ENCODE measurements at regions of chr1 and their contacts with region 1.

Region 1: DNA sequence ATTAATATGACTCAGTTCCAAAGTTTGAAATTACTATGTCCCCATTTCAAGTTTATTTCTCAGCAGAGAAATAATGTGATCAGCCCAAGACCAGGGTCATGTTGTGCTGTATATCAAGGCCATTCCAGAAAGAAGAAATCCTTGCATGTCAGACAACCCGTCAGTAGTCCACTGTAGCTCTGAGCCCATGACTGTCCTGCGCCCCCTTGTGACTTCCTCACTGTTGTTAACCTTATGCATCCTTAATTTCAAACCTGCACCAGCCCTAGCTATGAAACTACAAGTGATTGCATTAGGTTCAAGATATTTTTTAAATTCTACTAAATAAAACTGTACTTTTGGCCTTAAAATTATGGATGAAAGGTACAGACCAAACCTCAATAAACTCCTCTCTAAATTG is 133.0 kb downstream of the LRRC7 start:
- DNase-seq: peak; percentile 6
- ATAC-seq: peak; percentile 88
- H3K4me3 ChIP-seq: no peak overlapping the region
- H3K27ac ChIP-seq: no peak overlapping the region
- H3K4me1 ChIP-seq: no peaks in the 10 kb centered on the region
- H3K27me3 ChIP-seq: no peaks in the 10 kb centered on the region
- CTCF ChIP-seq: peak; percentile 26 to 53 (median 51); a peak in 5 of 6 replicates
- POLR2A ChIP-seq: no peak
- RAD21 ChIP-seq: peak; percentile 62

Region 2: GRCh38 chr1:68819190-68819829 is 881.5 kb before region 1 on chr1:
- CTCF ChIA-PET with region 1: no interaction called
- POLR2A ChIA-PET with region 1: no interaction called
- RAD21 ChIA-PET with region 1: no interaction called
- intact Hi-C with region 1: loop called (anchors 5 kb)
- DNase-seq: peak; percentile 31
- ATAC-seq: peak; percentile 97
- H3K4me3 ChIP-seq: no peak overlapping the region
- H3K27ac ChIP-seq: no peak overlapping the region
- H3K4me1 ChIP-seq: no peaks in the 10 kb centered on the region
- H3K27me3 ChIP-seq: peaks cover 4% of the 10 kb centered on the region; the same call in 1 of the 2 replicates
- CTCF ChIP-seq: peak; percentile 22 to 70 (median 61); a peak in 5 of 6 replicates
- POLR2A ChIP-seq: no peak
- RAD21 ChIP-seq: peak; percentile 69

Region 3: DNA sequence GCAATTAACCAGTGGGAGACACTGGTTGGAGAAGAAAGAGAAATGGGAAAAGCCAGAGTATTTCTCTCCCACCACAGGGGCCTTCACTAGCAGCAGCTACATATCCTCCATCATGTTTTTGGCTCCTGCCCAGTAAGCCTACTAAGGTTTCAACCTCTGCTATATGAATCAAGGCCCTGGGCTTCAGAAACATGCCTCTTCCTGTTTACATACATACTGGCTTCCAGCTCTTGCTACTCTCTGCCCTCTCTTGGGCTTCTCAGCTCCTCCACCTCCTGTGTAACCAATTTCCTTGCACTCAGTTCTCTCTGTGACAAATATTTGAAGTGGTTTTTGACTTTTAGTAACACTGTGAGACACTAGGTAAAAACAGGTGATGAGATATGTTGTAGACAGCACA is 52.3 kb before region 1 on chr1:
- CTCF ChIA-PET with region 1: no interaction called
- POLR2A ChIA-PET with region 1: no interaction called
- RAD21 ChIA-PET with region 1: no interaction called
- intact Hi-C with region 1: no loop called
- DNase-seq: no peak
- ATAC-seq: no peak
- H3K4me3 ChIP-seq: no peak overlapping the region
- H3K27ac ChIP-seq: no peak overlapping the region
- H3K4me1 ChIP-seq: no peaks in the 10 kb centered on the region
- H3K27me3 ChIP-seq: 0 out of 2 replicates have a peak, but pooled peaks cover 2% of the 10 kb centered on the region
- CTCF ChIP-seq: no peak
- POLR2A ChIP-seq: no peak
- RAD21 ChIP-seq: no peak

Measured in HCT116 (cell line).